Cardiac septum (tissue), 1 donor: ENCODE measurements at regions of chr2 and their contacts with region 1.

Region 1: GRCh38 chr2:221104361-221104811 is 467.7 kb downstream of the EPHA4 start:
- DNase-seq: peak; percentile 91

Region 2: GRCh38 chr2:221075203-221075602 is 29.2 kb before region 1 on chr2:
- intact Hi-C with region 1: loop called (anchors 1 kb)
- DNase-seq: no peak

Region 3: GRCh38 chr2:221444106-221444505 is 339.7 kb after region 1 on chr2:
- intact Hi-C with region 1: loop called (anchors 1 kb)
- DNase-seq: no peak